ENCODE measurements at regions of chr7 and their contacts with region 1.

Region 1: DNA sequence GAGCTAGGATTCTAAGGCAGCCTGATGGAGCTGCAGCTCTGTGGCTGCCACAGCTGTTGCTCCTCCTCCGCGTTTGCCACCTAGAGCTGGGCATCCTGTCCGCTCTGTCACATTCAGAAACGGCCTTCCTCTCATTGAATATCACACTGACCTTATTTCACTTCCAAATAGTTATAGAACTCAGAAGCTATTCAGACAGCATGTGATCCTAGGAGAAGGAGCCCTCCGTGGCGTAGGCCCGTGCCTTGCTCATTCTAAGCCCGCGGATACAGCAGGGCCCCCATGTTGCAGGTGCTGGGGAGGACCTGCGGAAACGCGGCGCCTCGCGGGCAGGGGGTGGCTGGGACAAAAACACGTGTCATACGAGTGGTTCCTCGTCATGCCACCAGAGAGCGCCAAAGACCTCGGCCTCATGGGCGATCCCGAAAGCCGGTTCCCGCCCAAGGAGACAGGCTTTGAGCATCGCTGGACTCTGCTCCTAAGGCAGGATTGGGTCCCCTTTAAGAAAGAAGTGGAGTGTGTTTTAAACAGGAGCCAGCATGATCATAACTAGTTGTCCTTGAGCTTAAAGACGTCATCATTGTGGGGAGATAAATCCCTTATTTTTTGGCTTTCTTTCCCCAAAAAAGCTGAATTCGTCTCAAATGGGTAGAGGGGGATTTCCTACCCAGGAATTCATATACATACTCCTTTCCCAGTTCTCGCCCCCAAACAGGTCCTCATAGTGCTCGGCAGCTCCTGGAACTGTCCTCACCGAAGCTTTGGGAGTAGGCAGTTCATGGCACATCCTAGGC is 17.9 kb upstream of the FIGNL1 start:
- DNase-seq: peak; percentile 88
- ATAC-seq: peak; percentile 97

Region 2: GRCh38 chr7:50595491-50596102 is 127.6 kb after region 1 on chr7:
- intact Hi-C with region 1: loop called (anchors 10 kb)
- DNase-seq: no peak
- ATAC-seq: peak; percentile 57

Region 3: DNA sequence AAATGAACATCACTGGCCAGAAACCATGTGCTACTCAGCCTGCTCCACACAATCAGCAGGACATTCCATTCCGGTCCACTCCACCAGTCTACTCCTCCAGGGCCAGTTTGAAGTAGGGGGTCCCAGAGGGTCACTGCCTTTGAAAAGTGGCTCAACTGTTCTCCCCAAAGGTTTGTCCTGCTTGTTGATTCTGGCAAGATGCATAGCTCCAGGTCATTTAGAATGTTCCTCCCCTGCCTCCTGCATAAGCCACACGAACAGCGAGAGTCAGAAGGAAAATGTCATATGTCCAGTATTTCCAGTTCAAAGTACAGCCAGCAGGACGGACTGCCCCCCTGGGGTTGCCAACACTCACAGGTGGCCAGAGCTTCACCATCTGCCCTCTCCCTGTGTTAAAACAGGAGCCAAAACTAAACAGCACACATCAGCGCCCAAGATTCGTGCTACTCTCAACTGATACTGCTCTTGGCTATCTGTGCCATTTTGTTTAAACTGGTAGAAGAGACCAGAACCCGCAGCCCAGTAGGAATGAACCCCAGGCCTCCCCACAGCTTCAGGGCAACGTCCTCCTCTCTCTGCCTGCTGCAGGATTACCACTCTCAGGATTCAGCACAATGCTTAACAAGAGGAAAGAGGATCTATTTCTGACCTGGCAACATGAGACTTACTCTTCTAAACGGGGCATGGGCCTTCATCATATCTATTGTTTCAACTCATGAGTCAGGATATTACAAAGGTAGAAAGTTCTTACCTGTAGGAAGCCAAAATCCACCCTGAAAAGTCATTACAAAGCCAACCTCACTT is 303.4 kb after region 1 on chr7:
- intact Hi-C with region 1: no loop called
- DNase-seq: no peak
- ATAC-seq: peak; percentile 72

Measured in Right ventricle myocardium superior (tissue), 1 donor.